HEK293 (cell line): ENCODE measurements at regions of chr5 and their contacts with region 1.

Region 1: DNA sequence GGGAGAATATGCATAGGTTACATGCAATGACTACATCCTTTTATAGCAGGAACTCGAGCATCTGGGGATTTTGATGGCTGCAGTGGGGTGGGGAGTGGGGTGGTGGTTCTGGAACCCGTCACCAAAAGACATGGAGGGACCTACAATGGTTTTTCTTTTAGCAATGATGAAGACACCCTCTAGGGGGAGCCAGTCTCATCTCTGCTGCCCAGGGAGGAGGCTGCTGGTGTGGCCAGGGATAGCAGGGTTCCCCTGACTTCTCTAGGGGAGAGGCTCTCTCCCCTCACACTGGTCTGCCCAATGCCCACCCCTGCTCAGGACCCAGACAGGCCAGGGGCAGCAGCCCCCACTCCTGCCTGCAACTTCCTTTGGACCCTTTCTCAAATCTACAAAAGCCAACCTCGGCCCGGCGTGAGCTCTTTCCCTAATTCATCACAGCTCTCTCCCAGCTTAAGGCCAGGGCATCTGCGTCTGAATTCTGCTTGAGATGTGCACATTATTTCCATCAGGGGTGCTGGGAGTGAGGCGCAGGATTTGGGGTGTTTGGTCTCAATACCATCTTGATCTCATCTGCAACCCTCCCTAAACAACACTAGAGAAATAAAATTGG is 73.6 kb upstream of the RETREG1 start:
- H3K4me3 ChIP-seq: no peak overlapping the region
- H3K27ac ChIP-seq: no peak overlapping the region
- H3K4me1 ChIP-seq: no peaks in the 10 kb centered on the region
- CTCF ChIP-seq: peak; percentile 58; the same call in 1 of the 2 replicates

Region 2: DNA sequence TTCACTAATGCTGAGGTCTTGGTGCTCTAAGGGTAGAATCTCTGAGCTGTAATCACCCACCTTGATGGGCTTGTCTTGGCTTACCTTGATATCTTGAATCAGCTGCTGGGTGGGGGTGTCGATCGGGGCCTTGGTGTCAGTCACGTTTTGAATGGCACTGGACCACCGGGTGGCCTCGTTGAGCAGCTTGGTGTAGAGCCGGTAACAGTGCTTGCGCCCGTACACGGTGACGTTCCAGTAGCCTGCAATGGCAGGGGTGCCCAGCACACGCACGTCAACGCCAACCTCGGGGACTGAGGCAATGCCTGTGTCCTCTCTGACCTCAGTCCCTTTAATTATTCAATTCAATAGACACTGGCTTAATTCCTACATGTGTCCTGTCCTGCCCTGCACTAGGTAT is 10.5 kb before region 1 on chr5:
- CTCF ChIA-PET with region 1: interaction called, 12 read pairs
- POLR2A ChIA-PET with region 1: no interaction called
- H3K4me3 ChIP-seq: no peak overlapping the region
- H3K27ac ChIP-seq: no peak overlapping the region
- H3K4me1 ChIP-seq: no peaks in the 10 kb centered on the region
- CTCF ChIP-seq: no peak

Region 3: DNA sequence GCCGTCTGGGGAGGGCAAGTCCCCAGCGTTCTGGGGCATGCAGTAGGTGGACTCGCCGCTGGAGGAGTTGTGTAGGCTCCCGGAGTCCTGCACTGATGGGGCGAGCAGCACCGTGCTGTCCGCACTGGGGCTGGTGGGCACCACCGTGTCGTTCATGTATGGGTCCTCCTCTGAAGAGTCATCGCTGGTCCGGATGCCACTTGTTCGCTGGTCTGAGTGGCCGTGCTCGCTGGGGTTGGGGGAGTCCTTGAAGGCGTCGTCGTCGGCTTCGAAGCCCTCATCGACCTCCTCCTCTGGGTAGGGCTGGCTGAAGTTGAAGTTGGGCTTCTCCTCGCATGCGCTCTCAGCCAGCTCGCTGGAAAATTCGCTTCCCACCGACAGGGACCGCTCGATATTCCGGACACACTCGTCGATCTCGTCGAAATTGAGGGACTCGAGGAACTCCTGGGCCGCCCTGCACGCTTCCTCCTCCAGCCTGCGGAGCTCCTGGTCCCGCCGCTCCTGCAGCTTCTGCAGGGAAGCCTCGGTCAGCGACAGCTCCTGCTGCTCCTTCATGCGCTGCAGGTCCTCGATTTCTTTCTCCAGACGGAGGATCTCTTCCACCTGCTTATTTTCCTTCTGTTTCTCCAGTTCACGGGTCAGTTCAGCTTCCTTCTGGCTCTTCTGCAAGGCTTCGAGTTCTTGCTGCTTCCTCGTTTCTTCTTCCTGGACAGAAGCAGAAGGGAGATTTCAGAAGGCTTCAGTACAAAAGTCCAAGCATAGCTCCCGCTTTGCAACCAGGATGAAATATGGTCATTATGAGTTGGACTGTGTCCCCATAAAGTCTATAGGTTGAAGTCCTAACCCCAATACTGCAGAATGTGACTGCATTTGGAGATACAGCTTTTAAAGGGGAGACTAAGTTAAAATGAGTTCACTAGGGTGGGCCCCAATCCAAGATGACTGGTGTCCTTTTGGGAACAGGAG is 11.1 kb after region 1 on chr5:
- CTCF ChIA-PET with region 1: interaction called, 25 read pairs
- POLR2A ChIA-PET with region 1: no interaction called
- H3K4me3 ChIP-seq: no peak overlapping the region
- H3K27ac ChIP-seq: no peak overlapping the region
- H3K4me1 ChIP-seq: no peaks in the 10 kb centered on the region
- CTCF ChIP-seq: no peak

Region 4: GRCh38 chr5:16707168-16707868 is 17.0 kb after region 1 on chr5:
- CTCF ChIA-PET with region 1: interaction called, 15 read pairs
- POLR2A ChIA-PET with region 1: no interaction called
- H3K4me3 ChIP-seq: no peak overlapping the region
- H3K27ac ChIP-seq: no peak overlapping the region
- H3K4me1 ChIP-seq: peaks cover 3% of the 10 kb centered on the region
- CTCF ChIP-seq: no peak

Region 5: GRCh38 chr5:16713386-16713928 is 23.1 kb after region 1 on chr5:
- CTCF ChIA-PET with region 1: interaction called, 15 read pairs
- POLR2A ChIA-PET with region 1: no interaction called
- H3K4me3 ChIP-seq: no peak overlapping the region
- H3K27ac ChIP-seq: no peak overlapping the region
- H3K4me1 ChIP-seq: peaks cover 15% of the 10 kb centered on the region
- CTCF ChIP-seq: no peak

Region 6: DNA sequence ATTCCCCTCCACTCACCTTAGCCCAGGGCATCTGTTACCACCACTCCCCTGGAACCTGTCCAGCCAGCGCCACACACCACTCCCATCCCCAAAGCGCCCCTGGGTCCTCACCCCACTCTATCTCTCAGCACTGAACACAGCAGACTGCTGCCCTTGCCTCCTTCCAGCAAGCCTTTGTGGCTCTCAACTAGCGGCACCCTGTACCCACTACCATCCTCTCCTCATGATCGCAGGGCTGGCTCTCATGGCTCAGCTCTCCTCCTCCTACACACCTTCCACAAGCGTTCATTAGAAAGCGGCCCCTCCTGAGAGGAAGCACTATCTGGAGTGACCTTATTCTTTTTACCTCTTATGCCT is 513.8 kb after region 1 on chr5:
- CTCF ChIA-PET with region 1: interaction called, 10 read pairs
- POLR2A ChIA-PET with region 1: no interaction called
- H3K4me3 ChIP-seq: no peak overlapping the region
- H3K27ac ChIP-seq: no peak overlapping the region
- H3K4me1 ChIP-seq: no peaks in the 10 kb centered on the region
- CTCF ChIP-seq: no peak